ENCODE measurements at regions of chr3 and their contacts with region 1.

Region 1: DNA sequence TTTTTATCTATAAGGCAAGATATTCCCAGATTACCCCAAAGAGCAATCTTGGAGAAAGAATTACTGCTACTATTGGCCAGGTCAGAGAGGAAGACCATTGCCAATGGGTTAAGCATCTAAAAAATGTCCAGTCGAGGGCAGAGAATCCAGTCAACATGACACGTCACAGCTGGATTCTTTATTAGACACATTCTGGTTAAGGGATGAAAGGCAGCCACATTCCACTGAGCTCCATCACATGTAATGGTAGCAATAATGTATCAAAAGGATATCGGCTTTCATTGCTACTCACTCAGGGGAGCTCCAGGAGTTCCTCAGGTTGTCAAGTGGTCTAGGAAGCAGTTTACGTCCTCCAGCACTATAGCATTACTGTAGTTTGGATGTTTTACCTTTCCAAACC is 421.1 kb downstream of the PLOD2 start:
- DNase-seq: no peak
- H3K4me3 Mint-ChIP-seq: no peak overlapping the region
- H3K27ac Mint-ChIP-seq: no peak overlapping the region
- H3K4me1 Mint-ChIP-seq: peaks cover 9% of the 10 kb centered on the region
- H3K27me3 Mint-ChIP-seq: no peaks in the 10 kb centered on the region
- CTCF ChIP-seq: no peak

Region 2: GRCh38 chr3:145387211-145387610 is 352.7 kb before region 1 on chr3:
- CTCF ChIA-PET with region 1: no interaction called
- intact Hi-C with region 1: loop called (anchors 5 kb)
- DNase-seq: no peak
- H3K4me3 Mint-ChIP-seq: no peak overlapping the region
- H3K27ac Mint-ChIP-seq: no peak overlapping the region
- H3K4me1 Mint-ChIP-seq: no peaks in the 10 kb centered on the region
- H3K27me3 Mint-ChIP-seq: no peaks in the 10 kb centered on the region
- CTCF ChIP-seq: no peak

Region 3: GRCh38 chr3:145649368-145649887 is 90.5 kb before region 1 on chr3:
- CTCF ChIA-PET with region 1: no interaction called
- intact Hi-C with region 1: no loop called
- DNase-seq: no peak
- H3K4me3 Mint-ChIP-seq: no peak overlapping the region
- H3K27ac Mint-ChIP-seq: no peak overlapping the region
- H3K4me1 Mint-ChIP-seq: no peaks in the 10 kb centered on the region
- H3K27me3 Mint-ChIP-seq: no peaks in the 10 kb centered on the region
- CTCF ChIP-seq: no peak

Region 4: DNA sequence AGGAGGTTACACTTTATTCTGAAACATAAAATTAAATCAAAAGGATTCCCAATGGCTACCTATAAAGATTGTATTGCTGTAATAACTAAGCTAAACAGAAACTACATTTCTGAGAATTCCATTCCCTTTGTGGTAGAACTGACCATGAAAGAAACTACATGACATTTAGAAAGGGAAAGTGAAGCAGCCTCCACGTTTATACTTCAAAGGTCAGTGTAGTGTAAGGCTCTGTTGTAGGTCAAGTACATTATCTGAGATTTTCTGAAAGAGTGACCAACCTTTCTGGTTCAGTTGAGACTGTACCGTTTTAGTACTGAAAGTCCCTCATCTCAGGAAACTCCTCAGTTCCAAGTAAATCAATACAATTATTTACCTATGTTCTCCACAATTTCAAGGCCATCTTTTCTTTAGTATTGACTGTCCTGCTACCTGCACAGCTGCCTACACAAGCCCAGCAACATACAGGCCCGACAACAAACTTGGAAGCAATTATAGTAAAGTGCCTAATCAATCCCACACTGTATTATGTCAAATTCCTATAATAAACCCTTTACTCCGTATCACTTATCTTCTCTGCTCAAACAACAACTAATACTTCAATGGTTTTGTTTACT is 78.1 kb after region 1 on chr3:
- CTCF ChIA-PET with region 1: no interaction called
- intact Hi-C with region 1: no loop called
- DNase-seq: no peak
- H3K4me3 Mint-ChIP-seq: no peak overlapping the region
- H3K27ac Mint-ChIP-seq: no peak overlapping the region
- H3K4me1 Mint-ChIP-seq: no peaks in the 10 kb centered on the region
- H3K27me3 Mint-ChIP-seq: no peaks in the 10 kb centered on the region
- CTCF ChIP-seq: no peak

Measured in Calu3 (cell line).